HepG2 (cell line): ENCODE measurements at regions of chr4 and their contacts with region 1.

Region 1: DNA sequence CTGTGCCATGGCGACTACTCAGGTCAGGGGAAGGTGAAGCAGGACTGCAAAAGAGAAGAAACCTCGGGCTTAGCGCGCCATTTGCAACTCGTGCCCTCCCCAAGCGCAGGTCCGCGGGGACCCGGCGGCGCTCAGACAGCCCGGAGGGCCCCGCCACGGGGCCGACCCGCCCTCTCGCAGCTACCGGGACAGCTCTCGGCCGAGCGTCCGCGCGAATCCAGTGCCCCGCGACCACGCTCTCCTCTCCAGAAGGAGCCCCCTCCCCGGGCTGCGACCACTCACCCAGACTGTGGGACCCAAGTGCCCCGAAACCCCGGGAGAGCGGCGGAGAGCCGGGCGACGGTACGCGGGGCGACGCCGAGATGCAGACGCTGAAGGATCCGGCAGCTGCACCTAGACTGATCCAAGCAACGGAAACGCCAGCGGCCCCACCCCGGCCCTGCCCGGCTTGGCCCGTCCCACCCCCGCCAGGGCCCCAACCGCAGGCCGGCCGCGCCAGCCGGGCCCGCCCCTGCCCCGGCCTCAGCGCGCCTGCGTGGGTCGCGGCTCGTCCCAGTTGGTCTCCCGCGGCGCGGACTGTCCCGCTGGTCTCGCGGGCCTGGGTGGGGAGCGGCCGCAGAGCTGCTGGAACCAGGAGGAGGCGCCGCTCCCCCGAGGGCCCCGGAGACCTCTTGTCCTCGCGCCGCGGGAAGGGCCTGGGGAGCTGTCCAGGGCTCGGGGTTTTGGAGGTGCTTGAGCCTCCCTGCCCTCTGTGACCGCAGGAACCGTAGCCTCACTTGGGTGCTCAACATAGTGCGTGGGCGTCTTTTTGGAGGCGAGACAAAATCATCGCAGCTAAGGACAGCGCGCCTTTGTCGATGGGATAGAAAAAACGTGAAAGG is at the start of gene ANXA5:
- DNase-seq: peak; percentile 63
- ATAC-seq: peak; percentile 96
- H3K4me3 ChIP-seq: peak within 1 kb of the TSS; percentile 93 to 97 (median 97)
- H3K27ac ChIP-seq: peak within 1 kb of the TSS; percentile 89
- H3K4me1 ChIP-seq: peaks cover 47% of the 10 kb centered on the region
- H3K27me3 ChIP-seq: peaks cover 0 to 15% of the 10 kb centered on the region in 2 experiments; a peak in 4 of 5 replicates
- CTCF ChIP-seq: peak; percentile 51
- EP300 ChIP-seq: no peak
- POLR2A ChIP-seq: peak; percentile 87 to 88
- RAD21 ChIP-seq: peak; percentile 8; the same call in 1 of the 2 replicates
- total RNA-seq, gene ANXA5: 342 and 477 TPM in 2 replicates

Region 2: GRCh38 chr4:121614101-121614500 is 82.7 kb before region 1 on chr4:
- CTCF ChIA-PET with region 1: no interaction called
- POLR2A ChIA-PET with region 1: no interaction called
- in situ Hi-C with region 1: no loop called
- intact Hi-C with region 1: no loop called
- DNase-seq: no peak
- ATAC-seq: no peak
- H3K4me3 ChIP-seq: no peak overlapping the region
- H3K27ac ChIP-seq: no peak overlapping the region
- H3K4me1 ChIP-seq: peaks cover 13% of the 10 kb centered on the region
- H3K27me3 ChIP-seq: no peaks in the 10 kb centered on the region; a peak in 2 of 5 replicates
- CTCF ChIP-seq: no peak
- EP300 ChIP-seq: no peak
- POLR2A ChIP-seq: no peak
- RAD21 ChIP-seq: no peak

Region 3: GRCh38 chr4:121675715-121676114 is 21.1 kb before region 1 on chr4:
- CTCF ChIA-PET with region 1: no interaction called
- POLR2A ChIA-PET with region 1: interaction called, 38 read pairs
- in situ Hi-C with region 1: no loop called
- intact Hi-C with region 1: no loop called
- DNase-seq: peak; percentile 41
- ATAC-seq: peak; percentile 75
- H3K4me3 ChIP-seq: no peak overlapping the region
- H3K27ac ChIP-seq: peak overlapping the region; percentile 75
- H3K4me1 ChIP-seq: peaks cover 40% of the 10 kb centered on the region
- H3K27me3 ChIP-seq: no peaks in the 10 kb centered on the region
- CTCF ChIP-seq: peak; percentile 54
- EP300 ChIP-seq: no peak
- POLR2A ChIP-seq: no peak
- RAD21 ChIP-seq: 0 out of 2 replicates have a peak, but pooled peaks have one; percentile 8

Region 4: GRCh38 chr4:121711263-121712000 is 14.6 kb after region 1 on chr4:
- CTCF ChIA-PET with region 1: no interaction called
- POLR2A ChIA-PET with region 1: interaction called, 15 read pairs
- in situ Hi-C with region 1: no loop called
- intact Hi-C with region 1: no loop called
- DNase-seq: peak; percentile 70
- ATAC-seq: peak; percentile 100
- H3K4me3 ChIP-seq: peak overlapping the region; percentile 31 to 58 (median 47); a peak in 5 of 6 replicates
- H3K27ac ChIP-seq: no peak overlapping the region
- H3K4me1 ChIP-seq: peaks cover 7% of the 10 kb centered on the region; the same call in 1 of the 2 replicates
- H3K27me3 ChIP-seq: peaks cover 0 to 7% of the 10 kb centered on the region in 2 experiments; a peak in 2 of 5 replicates
- CTCF ChIP-seq: no peak
- EP300 ChIP-seq: 0 out of 4 replicates have a peak, but pooled peaks of 1 of the 2 experiments have one; percentile 24
- POLR2A ChIP-seq: no peak
- RAD21 ChIP-seq: no peak

Region 5: DNA sequence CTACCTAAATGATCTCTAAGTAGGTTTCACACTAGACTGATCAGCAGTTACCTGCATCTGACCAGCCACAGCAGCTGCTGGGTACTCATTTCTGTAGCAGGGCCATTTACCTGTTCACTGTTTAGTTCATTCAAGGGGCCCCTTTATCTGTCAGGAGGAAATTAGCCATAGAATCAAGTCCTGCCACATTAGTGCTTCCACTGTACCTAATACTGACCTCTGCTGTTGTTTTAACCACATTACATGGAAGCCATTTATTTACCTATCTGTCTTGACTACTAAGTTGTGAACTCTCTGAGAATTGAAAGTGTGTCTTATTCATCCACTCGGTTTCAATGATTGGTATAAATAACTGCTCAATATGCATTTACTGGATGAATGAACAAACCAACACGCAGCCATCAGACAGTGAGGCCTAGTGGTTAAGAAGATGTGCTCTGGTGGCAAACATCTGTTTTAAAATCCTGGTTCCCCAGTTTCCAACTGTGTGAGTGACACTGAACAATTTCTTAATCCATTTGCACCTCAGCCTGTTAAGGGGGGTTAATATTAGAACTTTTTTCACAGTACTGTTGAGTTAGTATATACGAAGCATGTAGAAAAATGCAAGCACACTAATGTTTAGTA is 29.9 kb after region 1 on chr4:
- CTCF ChIA-PET with region 1: interaction called, 4 read pairs
- POLR2A ChIA-PET with region 1: interaction called, 3 read pairs
- in situ Hi-C with region 1: no loop called
- intact Hi-C with region 1: loop called (anchors 1 kb)
- DNase-seq: peak; percentile 64
- ATAC-seq: peak; percentile 92
- H3K4me3 ChIP-seq: no peak overlapping the region
- H3K27ac ChIP-seq: no peak overlapping the region
- H3K4me1 ChIP-seq: no peaks in the 10 kb centered on the region
- H3K27me3 ChIP-seq: peaks cover 0 to 4% of the 10 kb centered on the region in 2 experiments; a peak in 2 of 5 replicates
- CTCF ChIP-seq: peak; percentile 76
- EP300 ChIP-seq: no peak
- POLR2A ChIP-seq: no peak
- RAD21 ChIP-seq: 0 out of 2 replicates have a peak, but pooled peaks have one; percentile 34

Region 6: DNA sequence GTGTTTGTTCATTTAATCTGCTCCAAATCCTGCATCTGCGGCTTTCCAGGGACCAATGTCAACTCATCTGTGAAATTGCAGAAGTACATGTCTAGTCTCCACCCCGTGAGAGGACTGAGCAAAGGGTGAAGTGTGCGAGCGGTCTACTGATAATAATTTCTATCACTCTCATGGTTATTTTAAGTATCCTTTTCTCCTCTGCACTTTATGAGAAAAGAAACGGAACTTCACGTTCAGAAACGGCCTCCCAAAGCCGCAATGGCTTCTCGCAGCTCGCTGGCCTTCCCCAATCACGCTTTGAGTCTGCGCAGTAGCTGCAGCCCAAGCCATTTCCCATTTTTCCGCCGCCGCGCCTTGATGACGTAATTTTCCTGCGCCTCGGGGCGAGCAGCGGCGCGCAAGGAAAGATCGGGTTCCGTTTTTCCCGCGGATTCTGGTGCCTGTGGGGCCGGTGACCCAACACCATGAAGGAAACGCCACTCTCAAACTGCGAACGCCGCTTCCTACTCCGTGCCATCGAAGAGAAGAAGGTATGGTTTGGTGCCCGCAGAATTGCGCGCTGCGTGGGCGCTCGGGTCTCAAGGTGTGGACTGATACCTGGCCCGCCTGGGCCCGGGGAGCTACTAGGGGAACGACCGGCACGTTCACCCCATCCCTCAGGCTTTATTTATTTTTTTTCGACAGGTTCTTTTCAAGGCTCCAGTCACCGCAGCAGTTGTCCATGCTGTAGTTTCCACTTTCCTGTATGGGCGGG is 104.3 kb after region 1 on chr4 and contains the start of gene EXOSC9:
- CTCF ChIA-PET with region 1: no interaction called
- POLR2A ChIA-PET with region 1: interaction called, 12 read pairs
- in situ Hi-C with region 1: no loop called
- intact Hi-C with region 1: no loop called
- DNase-seq: peak; percentile 87
- ATAC-seq: peak; percentile 87
- H3K4me3 ChIP-seq: peak within 1 kb of the TSS; percentile 79 to 86 (median 84)
- H3K27ac ChIP-seq: peak within 1 kb of the TSS; percentile 93
- H3K4me1 ChIP-seq: peaks cover 47% of the 10 kb centered on the region
- H3K27me3 ChIP-seq: no peaks in the 10 kb centered on the region; a peak in 1 of 5 replicates
- CTCF ChIP-seq: no peak
- EP300 ChIP-seq: no peak; a peak in 1 of 4 replicates
- POLR2A ChIP-seq: peak; percentile 88 to 92
- RAD21 ChIP-seq: 0 out of 2 replicates have a peak, but pooled peaks have one; percentile 10
- total RNA-seq, gene EXOSC9: 48.0 and 61.5 TPM in 2 replicates

Region 7: DNA sequence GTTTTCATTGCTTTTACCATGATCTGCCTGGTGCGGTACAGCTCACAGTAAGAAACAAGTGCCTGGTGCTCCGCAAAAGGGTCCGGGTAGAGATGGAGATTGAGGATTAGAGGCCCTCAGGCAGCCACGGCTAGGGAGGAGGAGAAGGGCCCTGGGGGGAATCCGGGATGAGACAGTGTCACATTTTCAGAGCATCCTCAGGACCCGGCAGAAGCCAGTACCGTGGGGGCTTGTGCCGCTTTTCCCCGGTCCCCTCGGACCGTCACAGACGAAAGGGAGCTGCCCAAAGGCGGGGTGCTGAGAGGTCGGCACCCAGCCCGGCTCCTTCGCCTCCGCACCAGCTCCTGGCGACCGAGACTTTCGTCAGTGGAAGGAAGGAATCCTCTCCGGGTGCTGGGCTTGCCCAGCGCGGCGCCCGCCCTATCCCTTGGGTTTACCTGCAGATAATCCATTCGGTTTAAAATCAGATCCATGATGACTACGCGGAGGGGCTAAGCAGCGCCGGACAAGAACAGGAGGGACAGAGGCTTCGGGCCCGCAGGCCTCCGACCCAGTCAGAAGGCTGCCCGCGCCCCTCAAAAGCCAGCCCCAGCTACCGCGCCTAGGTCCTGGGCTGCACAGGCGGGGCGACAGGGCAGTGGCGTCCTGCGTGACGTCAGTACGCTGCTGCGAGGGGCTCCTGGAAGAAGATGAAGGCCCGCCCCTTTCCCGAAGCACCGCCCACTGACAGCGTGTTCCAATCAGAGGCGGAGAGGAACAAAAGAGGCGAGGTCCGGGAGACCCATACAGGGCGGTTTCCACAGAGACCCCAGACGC is 173.2 kb after region 1 on chr4 and contains the start of gene BBS7:
- CTCF ChIA-PET with region 1: no interaction called
- POLR2A ChIA-PET with region 1: no interaction called
- in situ Hi-C with region 1: no loop called
- intact Hi-C with region 1: loop called (anchors 5 kb)
- DNase-seq: peak; percentile 94
- ATAC-seq: peak; percentile 98
- H3K4me3 ChIP-seq: peak within 1 kb of the TSS; percentile 86 to 89 (median 86)
- H3K27ac ChIP-seq: peak within 1 kb of the TSS; percentile 64
- H3K4me1 ChIP-seq: peaks cover 14% of the 10 kb centered on the region
- H3K27me3 ChIP-seq: no peaks in the 10 kb centered on the region; a peak in 1 of 5 replicates
- CTCF ChIP-seq: no peak; the same call in 1 of the 2 replicates
- EP300 ChIP-seq: no peak
- POLR2A ChIP-seq: peak; percentile 64 to 96
- RAD21 ChIP-seq: no peak
- total RNA-seq, gene BBS7: 15.7 and 21.6 TPM in 2 replicates